HepG2 (cell line): ENCODE measurements at regions of chr14 and their contacts with region 1.

Region 1: GRCh38 chr14:31420319-31421111 is at the start of gene HEATR5A:
- DNase-seq: peak; percentile 98
- ATAC-seq: peak; percentile 90
- H3K4me3 ChIP-seq: peak within 1 kb of the TSS; percentile 73 to 99 (median 85)
- H3K27ac ChIP-seq: peak within 1 kb of the TSS; percentile 89
- H3K4me1 ChIP-seq: peaks cover 27% of the 10 kb centered on the region
- H3K27me3 ChIP-seq: no peaks in the 10 kb centered on the region; a peak in 1 of 5 replicates
- CTCF ChIP-seq: peak; percentile 76
- EP300 ChIP-seq: peak in 1 of 2 experiments; percentile 87; a peak in 1 of 4 replicates
- POLR2A ChIP-seq: peak in 1 of 2 experiments; percentile 99; a peak in 2 of 4 replicates
- RAD21 ChIP-seq: peak; percentile 74
- total RNA-seq, gene HEATR5A: 105 and 172 TPM in 2 replicates

Region 2: DNA sequence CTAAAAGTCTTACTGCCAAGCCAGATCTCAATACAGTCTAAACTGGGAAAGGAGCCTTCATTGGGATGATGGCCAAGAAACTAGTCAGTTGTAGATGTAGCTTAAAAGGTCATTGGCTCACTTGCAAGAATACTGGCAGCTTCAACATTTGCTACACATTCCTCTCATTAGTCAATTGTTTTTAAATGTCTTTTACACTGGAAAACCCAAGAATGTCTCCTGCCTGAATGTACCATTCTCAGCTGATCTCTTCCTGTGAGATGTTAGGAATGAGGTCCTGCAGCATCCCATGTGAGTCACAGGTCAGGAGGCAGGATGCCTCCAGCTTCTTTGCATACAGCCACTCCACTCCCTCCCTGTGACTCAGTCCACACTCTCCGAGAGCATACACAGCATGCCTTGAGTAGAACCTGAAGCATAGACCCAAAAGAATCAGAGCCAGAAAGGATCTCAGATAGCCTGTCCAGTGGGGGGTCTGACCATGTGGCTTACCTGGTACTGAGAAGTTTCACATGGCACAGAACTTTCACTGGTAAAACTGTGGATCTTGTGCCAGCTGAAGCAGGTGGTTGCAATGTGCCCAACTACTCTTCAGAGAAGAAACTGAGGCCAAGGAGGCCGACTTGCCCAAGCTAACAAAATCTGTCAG is 156.9 kb before region 1 on chr14:
- CTCF ChIA-PET with region 1: no interaction called
- POLR2A ChIA-PET with region 1: interaction called, 10 read pairs
- in situ Hi-C with region 1: no loop called
- intact Hi-C with region 1: no loop called
- DNase-seq: peak; percentile 91
- ATAC-seq: peak; percentile 73
- H3K4me3 ChIP-seq: no peak overlapping the region; a peak in 1 of 6 replicates
- H3K27ac ChIP-seq: peak overlapping the region; percentile 89
- H3K4me1 ChIP-seq: peaks cover 86% of the 10 kb centered on the region
- H3K27me3 ChIP-seq: no peaks in the 10 kb centered on the region; a peak in 1 of 5 replicates
- CTCF ChIP-seq: no peak
- EP300 ChIP-seq: peak in 1 of 2 experiments; percentile 54; a peak in 2 of 4 replicates
- POLR2A ChIP-seq: no peak
- RAD21 ChIP-seq: peak; percentile 28; the same call in 1 of the 2 replicates

Region 3: DNA sequence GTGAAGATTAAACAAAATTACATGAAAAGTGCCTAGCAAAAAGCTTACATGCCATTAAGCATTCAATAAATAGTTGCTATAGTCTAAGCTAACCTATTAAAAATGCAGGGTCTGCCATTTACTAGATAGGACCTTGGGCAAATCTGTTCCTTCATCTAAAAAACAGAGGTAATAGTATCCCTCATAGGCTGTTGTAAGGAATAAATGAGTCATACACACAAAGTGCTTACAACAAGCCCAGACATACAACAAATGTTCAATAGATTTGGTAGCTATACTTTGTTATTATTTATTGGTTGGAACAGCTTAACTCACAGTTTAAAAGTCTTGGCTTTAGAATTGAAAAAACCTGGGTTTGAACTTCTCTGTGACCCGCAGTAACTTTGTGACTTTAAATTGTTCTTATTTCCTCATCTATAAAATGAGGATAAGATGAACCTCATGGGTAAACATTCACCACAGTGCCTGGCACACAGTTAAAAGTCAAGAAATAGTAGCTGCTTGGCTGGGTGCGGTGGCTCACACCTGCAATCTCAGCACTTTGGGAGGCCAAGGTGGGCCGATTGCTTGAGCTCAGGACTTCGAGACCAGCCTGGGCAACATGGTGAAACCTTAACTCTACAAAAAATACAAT is 24.8 kb before region 1 on chr14:
- CTCF ChIA-PET with region 1: no interaction called
- POLR2A ChIA-PET with region 1: interaction called, 42 read pairs
- in situ Hi-C with region 1: no loop called
- intact Hi-C with region 1: no loop called
- DNase-seq: no peak
- ATAC-seq: no peak
- H3K4me3 ChIP-seq: no peak overlapping the region
- H3K27ac ChIP-seq: no peak overlapping the region
- H3K4me1 ChIP-seq: no peaks in the 10 kb centered on the region
- H3K27me3 ChIP-seq: no peaks in the 10 kb centered on the region
- CTCF ChIP-seq: no peak
- EP300 ChIP-seq: no peak
- POLR2A ChIP-seq: no peak
- RAD21 ChIP-seq: no peak

Region 4: DNA sequence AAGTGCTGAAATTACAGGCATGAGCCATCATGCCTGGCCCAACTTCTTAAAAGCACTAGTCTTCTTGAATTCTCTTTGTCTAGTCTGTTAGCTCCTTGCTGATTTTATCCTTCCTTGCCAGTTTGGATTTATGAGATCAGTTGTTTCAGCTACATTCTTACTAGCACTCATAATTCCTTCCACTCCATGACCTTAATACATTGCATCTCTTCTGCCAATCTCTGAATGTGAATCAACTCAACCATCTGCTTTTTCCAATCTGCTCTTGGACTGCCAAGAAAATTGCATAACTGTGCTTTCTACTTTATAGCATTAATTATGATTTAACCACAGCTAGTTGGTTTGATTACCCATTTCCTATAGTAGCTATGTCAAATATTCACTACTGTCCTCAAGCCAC is 14.8 kb after region 1 on chr14:
- CTCF ChIA-PET with region 1: no interaction called
- POLR2A ChIA-PET with region 1: interaction called, 19 read pairs
- in situ Hi-C with region 1: no loop called
- intact Hi-C with region 1: no loop called
- DNase-seq: no peak
- ATAC-seq: no peak
- H3K4me3 ChIP-seq: no peak overlapping the region
- H3K27ac ChIP-seq: no peak overlapping the region
- H3K4me1 ChIP-seq: peaks cover 8% of the 10 kb centered on the region; the same call in 1 of the 2 replicates
- H3K27me3 ChIP-seq: no peaks in the 10 kb centered on the region
- CTCF ChIP-seq: no peak
- EP300 ChIP-seq: no peak
- POLR2A ChIP-seq: no peak
- RAD21 ChIP-seq: no peak

Region 5: GRCh38 chr14:31456841-31457664 is 36.5 kb after region 1 on chr14 and contains the start of gene DTD2:
- CTCF ChIA-PET with region 1: no interaction called
- POLR2A ChIA-PET with region 1: interaction called, 181 read pairs
- in situ Hi-C with region 1: loop called (anchors 5 kb)
- intact Hi-C with region 1: loop called (anchors 1 kb)
- DNase-seq: peak; percentile 98
- ATAC-seq: peak; percentile 98
- H3K4me3 ChIP-seq: peak within 1 kb of the TSS; percentile 74 to 88 (median 84)
- H3K27ac ChIP-seq: peak within 1 kb of the TSS; percentile 87
- H3K4me1 ChIP-seq: peaks cover 21% of the 10 kb centered on the region
- H3K27me3 ChIP-seq: no peaks in the 10 kb centered on the region; a peak in 1 of 5 replicates
- CTCF ChIP-seq: no peak
- EP300 ChIP-seq: peak; percentile 22 to 60; a peak in 2 of 4 replicates
- POLR2A ChIP-seq: peak; percentile 98 to 99
- RAD21 ChIP-seq: peak; percentile 79
- total RNA-seq, gene DTD2: 49.8 and 68.8 TPM in 2 replicates